ENCODE measurements at regions of chr2 and their contacts with region 1.

Region 1: DNA sequence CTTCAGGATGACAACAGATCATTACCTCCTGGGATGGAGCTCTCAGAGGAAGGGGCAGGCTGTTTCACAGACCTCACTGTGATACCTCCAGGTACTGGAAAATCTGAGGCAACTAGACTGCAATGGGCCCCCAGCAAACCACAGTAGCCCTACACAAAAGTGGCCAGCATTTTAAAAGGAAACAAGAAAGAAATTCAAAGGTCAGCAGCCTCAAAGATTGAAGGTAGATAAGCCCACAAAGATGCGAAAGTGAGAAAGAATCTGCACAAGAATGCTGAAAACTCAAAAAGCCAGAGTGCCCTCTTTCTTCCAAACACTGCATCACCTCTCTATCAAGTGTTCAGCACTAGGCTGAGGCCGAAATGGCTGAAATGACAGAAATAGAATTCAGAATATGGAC is 499.5 kb upstream of the CHAC2 start:
- DNase-seq: peak in 1 of 2 experiments; percentile 6
- H3K4me3 ChIP-seq: no peak overlapping the region
- H3K4me3 Mint-ChIP-seq: no peak overlapping the region
- H3K27ac Mint-ChIP-seq: no peak overlapping the region
- H3K4me1 ChIP-seq: no peaks in the 10 kb centered on the region
- H3K4me1 Mint-ChIP-seq: no peaks in the 10 kb centered on the region
- H3K27me3 ChIP-seq: no peaks in the 10 kb centered on the region
- H3K27me3 Mint-ChIP-seq: peaks cover under 1% of the 10 kb centered on the region
- CTCF ChIP-seq: peak in 1 of 2 experiments; percentile 19

Region 2: DNA sequence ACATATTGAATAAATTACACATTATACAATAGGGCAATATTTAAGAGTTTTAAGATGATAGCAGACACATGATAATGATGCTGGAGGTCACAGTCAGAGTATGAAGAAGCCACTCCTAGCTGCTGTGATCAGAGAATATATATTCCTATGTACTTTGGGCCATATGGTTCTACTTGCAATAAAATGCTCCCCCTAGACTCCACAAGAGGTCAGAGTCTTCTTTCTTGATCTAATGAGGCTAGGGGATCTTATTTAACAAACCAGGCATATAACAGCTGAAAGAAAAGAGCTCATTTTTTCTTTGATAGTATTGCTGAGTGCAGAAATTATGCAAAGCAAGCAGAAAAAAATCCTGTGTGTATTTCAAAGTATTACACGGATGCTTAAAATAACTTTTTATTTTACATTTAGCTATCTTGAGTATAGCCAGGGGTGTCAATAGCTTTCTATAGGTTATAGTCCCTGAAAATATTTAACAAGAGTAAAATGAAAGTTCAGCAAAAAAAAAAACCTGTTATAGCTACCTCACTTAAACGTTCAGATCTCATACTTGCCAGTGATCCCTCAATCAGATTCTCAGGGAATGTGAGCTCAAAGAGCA is 249.2 kb before region 1 on chr2:
- CTCF ChIA-PET with region 1: interaction called, 3 read pairs
- POLR2A ChIA-PET with region 1: no interaction called
- intact Hi-C with region 1: loop called (anchors 5 kb)
- DNase-seq: no peak
- H3K4me3 ChIP-seq: no peak overlapping the region
- H3K4me3 Mint-ChIP-seq: no peak overlapping the region
- H3K27ac Mint-ChIP-seq: no peak overlapping the region
- H3K4me1 ChIP-seq: no peaks in the 10 kb centered on the region
- H3K4me1 Mint-ChIP-seq: no peaks in the 10 kb centered on the region
- H3K27me3 ChIP-seq: no peaks in the 10 kb centered on the region
- H3K27me3 Mint-ChIP-seq: no peaks in the 10 kb centered on the region
- CTCF ChIP-seq: peak; percentile 13 to 25

Measured in Caco-2 (cell line).